GM12878 (cell line): ENCODE measurements at regions of chr4 and their contacts with region 1.

Region 1: GRCh38 chr4:27720010-27720766 is 859.5 kb downstream of the STIM2 start:
- DNase-seq: peak; percentile 36
- ATAC-seq: peak; percentile 90
- H3K4me3 ChIP-seq: no peak overlapping the region
- H3K27ac ChIP-seq: no peak overlapping the region
- H3K4me1 ChIP-seq: no peaks in the 10 kb centered on the region
- H3K27me3 ChIP-seq: no peaks in the 10 kb centered on the region
- CTCF ChIP-seq: no peak
- EP300 ChIP-seq: peak; percentile 64 to 73; a peak in 2 of 4 replicates
- POLR2A ChIP-seq: no peak
- RAD21 ChIP-seq: no peak

Region 2: GRCh38 chr4:27702730-27703431 is 17.3 kb before region 1 on chr4:
- CTCF ChIA-PET with region 1: interaction called, 37 read pairs
- POLR2A ChIA-PET with region 1: interaction called, 6 read pairs
- RAD21 ChIA-PET with region 1: interaction called, 3 read pairs
- SMC1A ChIA-PET with region 1: interaction called, 11 read pairs
- in situ Hi-C with region 1: no loop called
- intact Hi-C with region 1: no loop called
- DNase-seq: no peak
- ATAC-seq: peak; percentile 80
- H3K4me3 ChIP-seq: no peak overlapping the region
- H3K27ac ChIP-seq: no peak overlapping the region
- H3K4me1 ChIP-seq: no peaks in the 10 kb centered on the region
- H3K27me3 ChIP-seq: no peaks in the 10 kb centered on the region
- CTCF ChIP-seq: peak; percentile 10 to 52 (median 36); a peak in 3 of 6 replicates
- EP300 ChIP-seq: no peak
- POLR2A ChIP-seq: no peak
- RAD21 ChIP-seq: peak; percentile 36

Region 3: DNA sequence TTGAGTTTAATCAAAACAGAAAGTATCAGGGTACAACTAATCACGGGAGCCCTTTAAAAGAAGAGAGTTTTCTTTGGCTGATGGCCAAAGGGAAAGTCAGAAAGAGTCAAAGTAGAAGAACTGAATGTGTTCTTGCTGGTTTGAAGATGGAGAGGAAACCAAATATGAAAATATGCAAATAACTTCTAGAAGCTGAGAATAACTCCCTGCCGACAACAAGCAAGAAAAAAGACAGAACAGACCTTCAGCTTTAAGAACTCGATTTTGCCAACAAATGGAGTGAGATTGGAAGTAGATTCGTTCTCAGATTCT is 44.3 kb after region 1 on chr4:
- CTCF ChIA-PET with region 1: interaction called, 13 read pairs
- POLR2A ChIA-PET with region 1: interaction called, 3 read pairs
- RAD21 ChIA-PET with region 1: interaction called, 17 read pairs
- SMC1A ChIA-PET with region 1: interaction called, 15 read pairs
- in situ Hi-C with region 1: no loop called
- intact Hi-C with region 1: loop called (anchors 2 kb)
- DNase-seq: peak; percentile 1
- ATAC-seq: peak; percentile 78
- H3K4me3 ChIP-seq: no peak overlapping the region
- H3K27ac ChIP-seq: no peak overlapping the region
- H3K4me1 ChIP-seq: no peaks in the 10 kb centered on the region
- H3K27me3 ChIP-seq: no peaks in the 10 kb centered on the region
- CTCF ChIP-seq: no peak
- EP300 ChIP-seq: no peak
- POLR2A ChIP-seq: no peak
- RAD21 ChIP-seq: no peak

Region 4: GRCh38 chr4:27861381-27862201 is 141.4 kb after region 1 on chr4:
- CTCF ChIA-PET with region 1: interaction called, 4 read pairs
- POLR2A ChIA-PET with region 1: no interaction called
- RAD21 ChIA-PET with region 1: interaction called, 3 read pairs
- SMC1A ChIA-PET with region 1: interaction called, 10 read pairs
- in situ Hi-C with region 1: no loop called
- intact Hi-C with region 1: loop called (anchors 5 kb)
- DNase-seq: no peak
- ATAC-seq: peak; percentile 93
- H3K4me3 ChIP-seq: no peak overlapping the region
- H3K27ac ChIP-seq: no peak overlapping the region
- H3K4me1 ChIP-seq: no peaks in the 10 kb centered on the region
- H3K27me3 ChIP-seq: no peaks in the 10 kb centered on the region
- CTCF ChIP-seq: peak; percentile 19 to 36 (median 35); a peak in 3 of 6 replicates
- EP300 ChIP-seq: no peak
- POLR2A ChIP-seq: no peak
- RAD21 ChIP-seq: peak; percentile 32; the same call in 1 of the 2 replicates